Sigmoid colon (tissue), 7 donors: ENCODE measurements at regions of chr5 and their contacts with region 1.

Region 1: GRCh38 chr5:131170540-131171275 is at the start of gene LYRM7:
- DNase-seq: peak; percentile 98
- H3K4me3 ChIP-seq: peak within 1 kb of the TSS; percentile 50 to 66 (median 62)
- H3K27ac ChIP-seq: peak within 1 kb of the TSS; percentile 70 to 85 (median 83)
- H3K4me1 ChIP-seq: peaks cover 0 to 22% (median 13%) of the 10 kb centered on the region in 4 donors
- H3K27me3 ChIP-seq: no peaks in the 10 kb centered on the region
- CTCF ChIP-seq: peak in 1 of 4 experiments; percentile 9
- EP300 ChIP-seq: no peak
- POLR2A ChIP-seq: peak; percentile 41 to 58
- total RNA-seq, gene LYRM7: 6.4 to 10.7 (median 9.0) TPM

Region 2: GRCh38 chr5:131081374-131081773 is 89.3 kb before region 1 on chr5:
- intact Hi-C with region 1: no loop called
- DNase-seq: no peak
- H3K4me3 ChIP-seq: no peak overlapping the region
- H3K27ac ChIP-seq: no peak overlapping the region
- H3K4me1 ChIP-seq: no peaks in the 10 kb centered on the region
- H3K27me3 ChIP-seq: no peaks in the 10 kb centered on the region
- CTCF ChIP-seq: no peak
- EP300 ChIP-seq: no peak
- POLR2A ChIP-seq: no peak

Region 3: GRCh38 chr5:131263648-131264450 is 93.1 kb after region 1 on chr5 and contains the start of gene CDC42SE2:
- intact Hi-C with region 1: loop called (anchors 2 kb)
- DNase-seq: peak; percentile 89
- H3K4me3 ChIP-seq: peak within 1 kb of the TSS; percentile 72 to 98 (median 85)
- H3K27ac ChIP-seq: peak within 1 kb of the TSS; percentile 84 to 92 (median 89)
- H3K4me1 ChIP-seq: peaks cover 0 to 24% (median 15%) of the 10 kb centered on the region in 4 donors
- H3K27me3 ChIP-seq: no peaks in the 10 kb centered on the region
- CTCF ChIP-seq: no peak
- EP300 ChIP-seq: no peak
- POLR2A ChIP-seq: peak; percentile 68 to 73
- total RNA-seq, gene CDC42SE2: 24.1 to 33.2 (median 28.6) TPM